Heart left ventricle (tissue), 16 donors: ENCODE measurements at regions of chr6 and their contacts with region 1.

Region 1: DNA sequence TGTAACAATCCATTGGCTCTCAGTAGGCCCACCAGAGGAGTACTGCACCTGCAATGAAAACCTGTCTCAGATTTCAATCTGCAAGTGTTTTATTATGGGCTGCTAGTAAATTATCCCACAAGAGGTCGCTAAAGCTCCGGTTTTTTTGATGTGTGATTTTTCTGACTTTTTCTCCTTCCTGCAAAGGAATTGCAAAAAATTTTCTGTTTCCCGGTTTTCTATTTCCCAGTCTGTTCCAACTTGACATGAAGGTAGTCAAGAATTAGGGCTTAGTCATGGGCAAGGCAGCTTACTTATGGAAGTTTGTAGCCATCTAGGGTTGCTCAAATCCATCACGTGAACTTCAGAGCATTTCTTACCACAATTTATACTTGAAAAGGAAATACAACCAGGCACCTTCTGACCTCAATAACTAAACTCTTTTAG is 38.5 kb upstream of the AHI1 start:
- DNase-seq: no peak
- ATAC-seq: peak in 1 of 4 donors; percentile 48
- H3K4me3 ChIP-seq: no peak overlapping the region
- H3K27ac ChIP-seq: no peak overlapping the region
- H3K4me1 ChIP-seq: peaks cover 0 to 6% (median 0%) of the 10 kb centered on the region in 12 donors
- H3K27me3 ChIP-seq: no peaks in the 10 kb centered on the region
- CTCF ChIP-seq: peak; percentile 49 to 82 (median 72)
- POLR2A ChIP-seq: no peak

Region 2: GRCh38 chr6:135358251-135358821 is 177.7 kb before region 1 on chr6:
- intact Hi-C with region 1: no loop called
- DNase-seq: no peak
- ATAC-seq: no peak
- H3K4me3 ChIP-seq: no peak overlapping the region
- H3K27ac ChIP-seq: no peak overlapping the region
- H3K4me1 ChIP-seq: peaks cover 0 to 5% (median 0%) of the 10 kb centered on the region in 12 donors
- H3K27me3 ChIP-seq: no peaks in the 10 kb centered on the region
- CTCF ChIP-seq: no peak
- POLR2A ChIP-seq: no peak

Region 3: DNA sequence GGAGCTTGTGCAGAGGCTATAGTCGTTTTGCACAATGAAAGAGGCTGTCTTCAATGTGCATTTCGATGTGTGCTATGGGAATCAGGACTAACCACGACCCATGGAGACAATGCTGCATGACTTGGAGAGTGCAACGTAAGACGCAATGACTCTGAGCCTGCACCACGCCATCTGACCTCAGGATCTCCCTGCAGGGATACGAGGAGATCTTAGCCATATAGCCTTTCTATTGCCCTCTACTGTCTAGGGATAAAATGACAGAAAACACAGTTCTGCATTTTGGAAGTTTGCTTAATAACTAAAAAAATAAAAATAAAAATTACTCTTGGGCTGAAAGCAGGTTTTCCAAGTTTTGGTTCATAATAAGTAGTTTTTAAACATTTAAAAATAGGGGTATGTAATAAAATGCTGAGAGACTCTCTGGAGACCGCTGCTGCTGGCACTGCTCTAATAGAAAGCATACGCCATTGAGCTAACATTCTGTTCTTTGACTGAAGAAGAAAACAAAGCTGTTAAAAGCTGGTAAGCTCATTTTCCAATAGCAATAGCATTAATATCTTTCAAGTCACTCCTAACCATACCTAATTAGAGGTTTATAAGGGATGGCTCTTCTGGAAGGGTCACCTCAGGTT is 402.7 kb after region 1 on chr6:
- intact Hi-C with region 1: loop called in 4 of 10 experiments (anchors 10 kb)
- DNase-seq: peak in 4 of 5 donors; percentile 24 to 57 (median 36)
- ATAC-seq: peak; percentile 48 to 84 (median 72)
- H3K4me3 ChIP-seq: peak overlapping the region in 6 of 12 donors; percentile 22 to 44 (median 30)
- H3K27ac ChIP-seq: peak overlapping the region; percentile 39 to 90 (median 71)
- H3K4me1 ChIP-seq: peaks cover 0 to 15% (median 0%) of the 10 kb centered on the region in 12 donors
- H3K27me3 ChIP-seq: no peaks in the 10 kb centered on the region
- CTCF ChIP-seq: peak in 11 of 12 donors; percentile 22 to 60 (median 40)
- POLR2A ChIP-seq: no peak

Region 4: DNA sequence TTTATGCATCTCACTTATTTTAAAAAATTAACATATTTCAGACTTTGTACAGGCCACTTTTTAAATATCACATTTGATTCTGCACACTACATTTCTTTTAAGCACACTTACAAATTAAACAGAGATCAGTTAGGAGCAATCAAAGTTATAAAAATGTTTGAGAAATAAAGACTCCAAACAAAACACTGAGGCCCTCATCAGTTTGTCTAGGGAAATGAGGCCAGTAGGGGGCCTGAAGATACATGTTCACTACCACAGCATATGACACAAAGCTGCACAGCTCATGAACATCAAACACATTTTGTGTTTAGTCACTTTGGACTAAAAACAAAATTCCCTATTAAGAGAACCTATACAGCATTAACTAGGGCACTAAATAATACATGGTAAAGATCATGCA is 496.0 kb after region 1 on chr6:
- intact Hi-C with region 1: loop called in 2 of 10 experiments (anchors 10 kb)
- DNase-seq: peak in 1 of 5 donors; percentile 45
- ATAC-seq: peak in 2 of 4 donors; percentile 55
- H3K4me3 ChIP-seq: no peak overlapping the region
- H3K27ac ChIP-seq: peak overlapping the region in 1 of 12 donors; percentile 6
- H3K4me1 ChIP-seq: peaks cover 0 to 36% (median 22%) of the 10 kb centered on the region in 12 donors
- H3K27me3 ChIP-seq: no peaks in the 10 kb centered on the region
- CTCF ChIP-seq: peak; percentile 35 to 70 (median 58)
- POLR2A ChIP-seq: no peak

Region 5: DNA sequence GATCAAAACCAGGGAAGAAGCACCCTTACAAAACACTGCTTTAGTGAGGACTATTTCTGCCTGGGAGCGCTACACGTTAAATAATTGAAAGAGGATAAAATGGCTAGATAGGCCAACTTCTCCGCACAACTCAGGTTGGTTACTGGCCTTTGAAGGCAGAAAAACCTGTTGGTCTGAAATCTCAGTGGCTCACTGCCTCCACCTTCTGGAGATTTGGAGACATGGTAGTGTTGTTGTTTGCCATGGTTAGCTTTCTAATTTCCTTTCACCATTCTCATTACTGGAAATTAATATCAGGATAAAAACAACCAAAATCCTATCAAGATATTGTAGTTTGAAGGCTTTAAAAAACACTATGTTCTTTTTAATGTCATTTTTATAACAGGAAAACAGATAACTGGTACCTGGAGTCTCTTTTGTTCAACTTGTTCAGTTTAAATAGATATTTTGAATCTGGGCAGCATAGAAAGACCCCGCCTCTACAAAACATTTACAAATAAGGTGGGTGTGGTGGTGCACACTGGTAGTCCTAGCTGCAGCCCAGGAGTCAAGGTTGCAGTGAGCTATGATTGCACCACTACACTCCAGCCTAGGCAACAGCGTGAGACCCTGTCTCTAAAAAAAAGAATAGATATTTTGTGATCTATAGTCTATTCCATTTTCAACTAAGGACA is 781.2 kb after region 1 on chr6:
- intact Hi-C with region 1: loop called in 7 of 10 experiments (anchors 5 to 10 kb)
- DNase-seq: peak in 3 of 5 donors; percentile 35 to 51 (median 37)
- ATAC-seq: peak in 3 of 4 donors; percentile 36 to 81 (median 58)
- H3K4me3 ChIP-seq: no peak overlapping the region
- H3K27ac ChIP-seq: no peak overlapping the region
- H3K4me1 ChIP-seq: no peaks in the 10 kb centered on the region
- H3K27me3 ChIP-seq: no peaks in the 10 kb centered on the region
- CTCF ChIP-seq: peak; percentile 69 to 88 (median 81)
- POLR2A ChIP-seq: no peak